ENCODE measurements at regions of chr14 and their contacts with region 1.

Region 1: GRCh38 chr14:31159682-31160296 is 47.8 kb downstream of the HECTD1 start:
- DNase-seq: no peak
- ATAC-seq: no peak
- H3K4me3 ChIP-seq: no peak overlapping the region
- H3K27ac ChIP-seq: no peak overlapping the region
- H3K4me1 ChIP-seq: no peaks in the 10 kb centered on the region
- H3K27me3 ChIP-seq: no peaks in the 10 kb centered on the region

Region 2: GRCh38 chr14:31118892-31119291 is 40.9 kb before region 1 on chr14:
- intact Hi-C with region 1: loop called in 1 of 4 experiments (anchors 5 kb)
- DNase-seq: no peak
- ATAC-seq: no peak
- H3K4me3 ChIP-seq: no peak overlapping the region
- H3K27ac ChIP-seq: no peak overlapping the region
- H3K4me1 ChIP-seq: no peaks in the 10 kb centered on the region
- H3K27me3 ChIP-seq: no peaks in the 10 kb centered on the region

Region 3: DNA sequence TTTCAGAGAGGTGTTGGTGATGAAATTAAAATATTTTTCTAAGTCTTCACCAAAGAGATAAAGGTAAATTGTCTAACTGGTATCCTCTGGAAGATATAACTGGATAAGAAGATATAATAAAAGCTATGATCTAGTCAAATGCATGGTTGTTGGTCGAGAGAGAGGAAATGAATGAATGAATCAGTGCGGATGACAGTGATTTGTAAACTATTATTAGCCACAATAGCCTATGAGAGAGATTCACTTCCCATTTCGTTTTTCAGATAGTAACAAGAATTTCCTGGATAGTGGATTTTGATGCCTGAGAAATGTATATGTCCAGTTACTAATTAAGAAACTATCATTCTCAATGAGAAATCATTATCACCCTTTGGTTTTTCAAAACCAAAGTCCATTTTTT is 197.5 kb after region 1 on chr14:
- intact Hi-C with region 1: loop called in 2 of 4 experiments (anchors 10 kb)
- DNase-seq: no peak
- ATAC-seq: no peak
- H3K4me3 ChIP-seq: no peak overlapping the region
- H3K27ac ChIP-seq: no peak overlapping the region
- H3K4me1 ChIP-seq: no peaks in the 10 kb centered on the region
- H3K27me3 ChIP-seq: no peaks in the 10 kb centered on the region